SK-N-SH (cell line): ENCODE measurements at regions of chr17 and their contacts with region 1.

Region 1: GRCh38 chr17:28763804-28764266 is 20.0 kb downstream of the TRAF4 start:
- DNase-seq: peak; percentile 78
- H3K4me3 ChIP-seq: no peak overlapping the region
- H3K27ac ChIP-seq: peak overlapping the region in 1 of 2 experiments; percentile 0; a peak in 1 of 4 replicates
- H3K4me1 ChIP-seq: peaks cover 0 to 19% of the 10 kb centered on the region in 2 experiments; a peak in 1 of 4 replicates
- H3K27me3 ChIP-seq: no peaks in the 10 kb centered on the region
- CTCF ChIP-seq: peak; percentile 96
- EP300 ChIP-seq: no peak
- RAD21 ChIP-seq: peak; percentile 81

Region 2: GRCh38 chr17:28684963-28685362 is 78.9 kb before region 1 on chr17:
- CTCF ChIA-PET with region 1: no interaction called
- POLR2A ChIA-PET with region 1: no interaction called
- DNase-seq: peak; percentile 47
- H3K4me3 ChIP-seq: no peak overlapping the region
- H3K27ac ChIP-seq: no peak overlapping the region
- H3K4me1 ChIP-seq: no peaks in the 10 kb centered on the region
- H3K27me3 ChIP-seq: no peaks in the 10 kb centered on the region
- CTCF ChIP-seq: no peak
- EP300 ChIP-seq: no peak
- RAD21 ChIP-seq: peak; percentile 57

Region 3: GRCh38 chr17:28750178-28751047 is 13.4 kb before region 1 on chr17:
- CTCF ChIA-PET with region 1: interaction called, 125 read pairs
- POLR2A ChIA-PET with region 1: interaction called, 3 read pairs
- DNase-seq: peak; percentile 87
- H3K4me3 ChIP-seq: peak overlapping the region in 1 of 2 experiments; percentile 33; a peak in 1 of 4 replicates
- H3K27ac ChIP-seq: peak overlapping the region; percentile 36 to 44; a peak in 2 of 4 replicates
- H3K4me1 ChIP-seq: peaks cover 22 to 32% of the 10 kb centered on the region in 2 experiments; a peak in 3 of 4 replicates
- H3K27me3 ChIP-seq: no peaks in the 10 kb centered on the region
- CTCF ChIP-seq: peak; percentile 97
- EP300 ChIP-seq: peak in 1 of 2 experiments; percentile 18; a peak in 1 of 4 replicates
- RAD21 ChIP-seq: peak; percentile 86

Region 4: GRCh38 chr17:28812091-28812747 is 48.4 kb after region 1 on chr17:
- CTCF ChIA-PET with region 1: interaction called, 12 read pairs
- POLR2A ChIA-PET with region 1: interaction called, 3 read pairs
- DNase-seq: peak; percentile 98
- H3K4me3 ChIP-seq: peak overlapping the region; percentile 67 to 88
- H3K27ac ChIP-seq: peak overlapping the region; percentile 93 to 95
- H3K4me1 ChIP-seq: peaks cover 3 to 30% of the 10 kb centered on the region in 2 experiments
- H3K27me3 ChIP-seq: no peaks in the 10 kb centered on the region
- CTCF ChIP-seq: no peak
- EP300 ChIP-seq: no peak; a peak in 1 of 4 replicates
- RAD21 ChIP-seq: no peak

Region 5: DNA sequence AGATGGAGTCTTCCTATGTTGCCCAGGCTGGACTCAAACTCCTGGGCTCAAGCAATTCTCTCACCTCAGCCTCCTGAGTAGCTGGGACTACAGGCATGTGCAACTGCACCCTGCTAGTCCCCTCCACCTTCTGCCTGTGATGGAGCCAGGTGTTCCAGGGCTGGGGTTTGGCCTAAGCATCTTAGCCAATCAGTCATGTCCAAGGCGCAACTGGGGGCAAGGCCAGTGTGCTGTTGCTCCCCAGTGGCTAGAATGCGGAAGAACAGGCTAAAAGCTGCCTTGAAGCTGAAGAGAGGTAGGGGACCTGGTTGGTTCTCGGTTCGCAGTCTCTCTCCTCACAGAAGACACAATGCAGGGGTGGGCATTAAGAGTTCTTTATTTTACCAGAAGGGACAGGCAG is 115.1 kb after region 1 on chr17:
- CTCF ChIA-PET with region 1: interaction called, 18 read pairs
- POLR2A ChIA-PET with region 1: no interaction called
- DNase-seq: peak; percentile 52
- H3K4me3 ChIP-seq: no peak overlapping the region
- H3K27ac ChIP-seq: no peak overlapping the region
- H3K4me1 ChIP-seq: no peaks in the 10 kb centered on the region
- H3K27me3 ChIP-seq: no peaks in the 10 kb centered on the region
- CTCF ChIP-seq: peak; percentile 52
- EP300 ChIP-seq: no peak
- RAD21 ChIP-seq: peak; percentile 52

Region 6: DNA sequence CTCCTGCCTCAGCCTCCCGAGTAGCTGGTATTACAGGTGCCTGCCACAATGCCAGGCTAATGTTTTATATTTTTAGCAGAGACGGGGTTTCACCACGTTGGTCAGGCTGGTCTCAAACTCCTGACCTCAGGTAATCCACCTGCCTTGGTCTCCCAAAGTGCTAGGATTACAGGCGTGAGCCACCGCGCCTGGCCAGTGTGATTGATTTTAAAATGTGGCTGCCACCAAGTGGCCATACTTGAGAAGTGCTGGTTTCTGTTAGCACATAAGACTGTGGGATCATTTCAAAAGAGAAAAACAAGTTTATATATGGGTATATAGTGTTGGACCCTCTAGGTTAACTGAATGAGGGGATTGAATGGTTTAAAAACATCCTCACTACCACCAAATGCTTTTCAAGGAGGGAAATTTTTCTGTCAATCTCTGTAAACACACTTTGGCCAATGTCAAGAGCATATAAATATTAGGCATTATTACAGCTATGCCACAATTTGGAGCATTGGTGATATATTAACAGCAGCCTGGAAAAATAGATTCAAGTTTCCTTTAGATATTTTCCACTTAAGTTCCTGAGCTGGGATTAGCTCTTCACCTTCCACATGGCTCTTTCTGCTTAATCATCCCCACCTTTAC is 152.6 kb after region 1 on chr17:
- CTCF ChIA-PET with region 1: interaction called, 63 read pairs
- POLR2A ChIA-PET with region 1: no interaction called
- DNase-seq: peak; percentile 49
- H3K4me3 ChIP-seq: peak overlapping the region in 1 of 2 experiments; percentile 33; a peak in 1 of 4 replicates
- H3K27ac ChIP-seq: no peak overlapping the region
- H3K4me1 ChIP-seq: no peaks in the 10 kb centered on the region
- H3K27me3 ChIP-seq: no peaks in the 10 kb centered on the region
- CTCF ChIP-seq: peak; percentile 71
- EP300 ChIP-seq: no peak
- RAD21 ChIP-seq: peak; percentile 62

Region 7: DNA sequence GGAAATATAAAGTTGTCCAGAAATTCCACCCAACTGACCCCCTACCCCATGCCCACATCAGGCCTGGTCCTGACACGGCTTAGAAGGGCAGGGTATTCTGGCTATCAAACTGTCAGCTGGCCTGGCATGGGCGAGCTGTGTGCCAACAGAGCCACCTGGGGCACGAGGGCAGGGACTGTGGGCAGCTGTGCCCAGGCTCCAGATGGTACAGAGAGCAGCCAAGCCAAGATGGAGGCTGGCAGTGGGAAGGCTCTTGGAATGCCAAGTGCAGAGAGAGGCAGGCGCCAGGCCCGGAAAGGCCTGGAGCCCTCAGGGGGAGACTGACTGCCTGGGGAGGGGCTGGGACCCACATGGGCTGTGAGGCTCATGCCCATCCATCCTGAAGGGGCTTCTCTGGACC is 211.8 kb after region 1 on chr17:
- CTCF ChIA-PET with region 1: no interaction called
- POLR2A ChIA-PET with region 1: no interaction called
- DNase-seq: no peak
- H3K4me3 ChIP-seq: no peak overlapping the region
- H3K27ac ChIP-seq: peak overlapping the region in 1 of 2 experiments; percentile 29; a peak in 1 of 4 replicates
- H3K4me1 ChIP-seq: peaks cover 0 to 74% of the 10 kb centered on the region in 2 experiments; a peak in 3 of 4 replicates
- H3K27me3 ChIP-seq: peaks cover 4% of the 10 kb centered on the region; the same call in 1 of the 2 replicates
- CTCF ChIP-seq: no peak
- EP300 ChIP-seq: no peak
- RAD21 ChIP-seq: no peak